Thyroid gland (tissue), 4 donors: ENCODE measurements at regions of chr10 and their contacts with region 1.

Region 1: GRCh38 chr10:120942806-120943413 is 91.7 kb downstream of the WDR11 start:
- DNase-seq: peak; percentile 72 to 79
- H3K4me3 ChIP-seq: no peak overlapping the region
- H3K27ac ChIP-seq: no peak overlapping the region
- H3K4me1 ChIP-seq: no peaks in the 10 kb centered on the region
- H3K27me3 ChIP-seq: no peaks in the 10 kb centered on the region
- CTCF ChIP-seq: peak; percentile 65 to 90 (median 84)
- POLR2A ChIP-seq: no peak

Region 2: DNA sequence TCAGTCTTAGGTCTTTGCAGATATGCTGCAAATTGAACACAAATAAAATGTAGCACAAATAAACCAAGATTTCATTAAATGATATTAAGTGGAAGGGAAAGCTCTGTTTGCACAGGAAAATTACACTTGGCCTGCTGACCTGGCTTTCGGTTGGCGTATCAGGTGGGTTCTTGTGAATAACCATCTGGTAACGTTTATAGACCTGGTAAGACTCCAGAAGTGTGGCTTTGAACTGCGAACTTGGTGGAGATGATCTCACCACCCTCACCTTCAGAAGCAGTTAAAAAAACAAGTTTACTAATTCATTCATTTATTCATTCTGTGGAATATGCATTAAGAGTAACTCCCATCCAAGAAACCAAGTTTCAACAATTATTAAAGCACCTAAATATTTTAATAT is 956.8 kb after region 1 on chr10:
- intact Hi-C with region 1: loop called (anchors 5 kb)
- DNase-seq: no peak
- H3K4me3 ChIP-seq: no peak overlapping the region
- H3K27ac ChIP-seq: no peak overlapping the region
- H3K4me1 ChIP-seq: no peaks in the 10 kb centered on the region
- H3K27me3 ChIP-seq: no peaks in the 10 kb centered on the region
- CTCF ChIP-seq: no peak
- POLR2A ChIP-seq: no peak